Caco-2 (cell line): ENCODE measurements at regions of chr11 and their contacts with region 1.

Region 1: DNA sequence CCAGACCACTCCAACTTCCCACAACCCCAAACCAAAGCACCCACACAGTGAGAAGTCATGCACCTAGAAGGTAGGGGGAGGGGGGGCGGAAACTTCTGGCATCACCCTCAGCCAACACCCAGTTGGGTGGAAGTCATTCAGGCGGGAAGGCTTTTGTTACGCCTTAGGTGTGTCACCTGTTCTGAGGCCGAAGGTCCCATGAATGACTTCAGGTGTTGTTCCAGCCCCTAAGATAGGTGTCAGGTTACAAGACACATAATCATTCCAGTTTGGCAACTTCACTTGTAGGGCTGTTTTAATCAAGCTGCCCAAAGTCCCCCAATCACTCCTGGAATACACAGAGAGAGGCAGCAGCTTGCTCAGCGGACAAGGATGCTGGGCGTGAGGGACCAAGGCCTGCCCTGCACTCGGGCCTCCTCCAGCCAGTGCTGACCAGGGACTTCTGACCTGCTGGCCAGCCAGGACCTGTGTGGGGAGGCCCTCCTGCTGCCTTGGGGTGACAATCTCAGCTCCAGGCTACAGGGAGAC is at the start of gene TMPRSS4:
- DNase-seq: peak; percentile 93 to 98
- H3K4me3 ChIP-seq: peak within 1 kb of the TSS; percentile 35
- H3K4me3 Mint-ChIP-seq: peak within 1 kb of the TSS; percentile 64
- H3K27ac Mint-ChIP-seq: peak within 1 kb of the TSS; percentile 98
- H3K4me1 ChIP-seq: peaks cover 33% of the 10 kb centered on the region
- H3K4me1 Mint-ChIP-seq: peaks cover 42% of the 10 kb centered on the region
- H3K27me3 ChIP-seq: no peaks in the 10 kb centered on the region
- H3K27me3 Mint-ChIP-seq: no peaks in the 10 kb centered on the region
- CTCF ChIP-seq: no peak
- total RNA-seq, gene TMPRSS4: 83.2 and 86.4 TPM in 2 replicates

Region 2: DNA sequence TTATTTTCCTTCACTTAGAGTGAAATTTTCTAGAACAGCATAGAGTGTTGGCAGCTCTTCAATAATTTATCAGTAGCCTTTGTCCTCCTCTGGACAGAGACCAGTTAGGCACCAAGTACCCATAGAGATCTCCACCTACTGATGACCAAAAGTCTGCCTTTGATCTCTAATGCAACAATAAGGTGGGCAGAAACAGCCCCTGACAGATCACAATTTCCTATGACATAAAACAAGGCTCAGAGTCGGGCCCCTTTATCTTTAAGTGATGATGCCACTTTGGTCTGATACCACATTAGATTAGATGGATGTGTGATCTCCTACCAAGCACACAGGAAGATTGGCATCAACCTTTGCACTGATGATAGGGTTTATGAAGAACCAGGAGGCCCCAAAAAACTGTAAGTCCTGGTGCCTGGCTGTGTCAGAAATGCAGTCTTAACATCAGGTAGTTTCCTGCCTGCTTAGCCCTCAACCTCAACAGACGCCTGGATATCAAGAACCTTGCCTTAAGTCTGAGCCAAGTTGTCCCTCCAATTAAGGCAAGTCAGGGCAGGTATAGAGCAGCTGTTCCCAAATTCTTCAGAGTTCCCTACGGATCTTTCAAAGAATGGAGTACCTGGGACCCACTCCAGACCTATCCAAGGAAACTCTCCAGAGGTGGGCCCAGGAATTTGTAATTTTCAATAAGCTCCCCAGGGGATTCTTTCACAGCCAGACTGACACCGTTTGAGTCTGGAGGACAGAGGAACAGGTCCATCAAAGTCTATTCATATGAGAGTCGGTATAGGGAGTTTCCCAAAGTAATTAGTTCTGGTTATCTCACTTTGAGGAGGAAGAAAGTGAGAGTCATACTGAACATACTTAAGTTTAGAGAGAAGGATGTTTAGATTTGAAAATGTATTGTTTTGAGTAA is 30.5 kb before region 1 on chr11:
- CTCF ChIA-PET with region 1: no interaction called
- POLR2A ChIA-PET with region 1: no interaction called
- intact Hi-C with region 1: no loop called
- DNase-seq: no peak
- H3K4me3 ChIP-seq: no peak overlapping the region
- H3K4me3 Mint-ChIP-seq: no peak overlapping the region
- H3K27ac Mint-ChIP-seq: no peak overlapping the region
- H3K4me1 ChIP-seq: no peaks in the 10 kb centered on the region
- H3K4me1 Mint-ChIP-seq: no peaks in the 10 kb centered on the region
- H3K27me3 ChIP-seq: no peaks in the 10 kb centered on the region
- H3K27me3 Mint-ChIP-seq: peaks cover 25% of the 10 kb centered on the region
- CTCF ChIP-seq: no peak

Region 3: GRCh38 chr11:118095493-118095892 is 18.7 kb after region 1 on chr11:
- CTCF ChIA-PET with region 1: interaction called, 19 read pairs
- POLR2A ChIA-PET with region 1: interaction called, 8 read pairs
- intact Hi-C with region 1: loop called (anchors 1 kb)
- DNase-seq: no peak
- H3K4me3 ChIP-seq: no peak overlapping the region
- H3K4me3 Mint-ChIP-seq: peak overlapping the region; percentile 16
- H3K27ac Mint-ChIP-seq: peak overlapping the region; percentile 7
- H3K4me1 ChIP-seq: peaks cover 67% of the 10 kb centered on the region
- H3K4me1 Mint-ChIP-seq: peaks cover 55% of the 10 kb centered on the region
- H3K27me3 ChIP-seq: no peaks in the 10 kb centered on the region
- H3K27me3 Mint-ChIP-seq: no peaks in the 10 kb centered on the region
- CTCF ChIP-seq: no peak

Region 4: GRCh38 chr11:118194835-118195627 is 118.2 kb after region 1 on chr11:
- CTCF ChIA-PET with region 1: no interaction called
- POLR2A ChIA-PET with region 1: no interaction called
- intact Hi-C with region 1: no loop called
- DNase-seq: peak; percentile 93 to 94
- H3K4me3 ChIP-seq: no peak overlapping the region
- H3K4me3 Mint-ChIP-seq: peak overlapping the region; percentile 30
- H3K27ac Mint-ChIP-seq: peak overlapping the region; percentile 77
- H3K4me1 ChIP-seq: peaks cover 53% of the 10 kb centered on the region
- H3K4me1 Mint-ChIP-seq: peaks cover 44% of the 10 kb centered on the region
- H3K27me3 ChIP-seq: no peaks in the 10 kb centered on the region
- H3K27me3 Mint-ChIP-seq: no peaks in the 10 kb centered on the region
- CTCF ChIP-seq: no peak